ENCODE measurements at regions of chr5 and their contacts with region 1.

Region 1: DNA sequence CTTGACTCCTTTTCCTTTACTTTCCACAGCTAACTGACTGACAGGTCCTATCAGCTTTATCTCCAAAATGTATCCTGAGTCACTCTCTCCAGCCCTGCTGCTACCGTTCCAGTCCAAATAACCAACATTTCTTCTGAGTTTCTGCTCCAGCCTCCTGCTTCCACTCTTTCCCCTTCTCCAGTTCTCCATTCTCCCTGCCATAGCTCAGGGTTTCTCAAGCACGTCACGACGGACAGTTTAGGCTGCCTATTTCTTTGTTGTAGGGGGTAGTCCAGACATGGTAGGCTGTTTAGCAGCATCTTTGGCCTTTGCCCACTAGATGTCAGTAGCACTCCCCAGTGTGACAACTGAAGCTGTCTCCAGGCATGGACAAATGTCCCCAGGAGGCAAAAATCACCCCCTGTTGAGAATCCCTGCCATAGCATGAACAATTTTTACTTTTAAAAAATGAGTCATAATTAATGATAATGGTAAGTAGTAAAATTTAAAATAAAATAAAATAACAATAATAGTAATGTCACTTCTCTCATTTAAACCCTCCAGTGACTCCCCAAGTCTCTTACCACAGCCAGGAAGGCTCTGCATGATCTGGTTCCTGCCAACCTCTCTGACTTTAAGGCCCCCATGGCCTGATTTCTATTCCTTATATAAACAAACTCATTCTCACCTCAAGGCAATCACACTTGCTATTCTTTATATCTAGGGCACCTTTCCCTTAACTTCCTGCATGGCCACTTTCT is 105.4 kb upstream of the FER start:
- DNase-seq: peak; percentile 82
- H3K4me3 Mint-ChIP-seq: peak overlapping the region; percentile 31
- H3K27ac Mint-ChIP-seq: peak overlapping the region; percentile 30
- H3K4me1 Mint-ChIP-seq: peaks cover 17% of the 10 kb centered on the region
- H3K27me3 Mint-ChIP-seq: no peaks in the 10 kb centered on the region
- CTCF ChIP-seq: peak; percentile 93

Region 2: GRCh38 chr5:109196486-109197160 is 554.3 kb after region 1 on chr5:
- CTCF ChIA-PET with region 1: interaction called, 12 read pairs
- intact Hi-C with region 1: no loop called
- DNase-seq: no peak
- H3K4me3 Mint-ChIP-seq: no peak overlapping the region
- H3K27ac Mint-ChIP-seq: no peak overlapping the region
- H3K4me1 Mint-ChIP-seq: peaks cover 14% of the 10 kb centered on the region
- H3K27me3 Mint-ChIP-seq: no peaks in the 10 kb centered on the region
- CTCF ChIP-seq: no peak